Activated CD8-positive, alpha-beta T cell treated with anti-CD3 and anti-CD28 coated beads for 36 hours (primary cell): ENCODE measurements at regions of chr1 and their contacts with region 1.

Region 1: DNA sequence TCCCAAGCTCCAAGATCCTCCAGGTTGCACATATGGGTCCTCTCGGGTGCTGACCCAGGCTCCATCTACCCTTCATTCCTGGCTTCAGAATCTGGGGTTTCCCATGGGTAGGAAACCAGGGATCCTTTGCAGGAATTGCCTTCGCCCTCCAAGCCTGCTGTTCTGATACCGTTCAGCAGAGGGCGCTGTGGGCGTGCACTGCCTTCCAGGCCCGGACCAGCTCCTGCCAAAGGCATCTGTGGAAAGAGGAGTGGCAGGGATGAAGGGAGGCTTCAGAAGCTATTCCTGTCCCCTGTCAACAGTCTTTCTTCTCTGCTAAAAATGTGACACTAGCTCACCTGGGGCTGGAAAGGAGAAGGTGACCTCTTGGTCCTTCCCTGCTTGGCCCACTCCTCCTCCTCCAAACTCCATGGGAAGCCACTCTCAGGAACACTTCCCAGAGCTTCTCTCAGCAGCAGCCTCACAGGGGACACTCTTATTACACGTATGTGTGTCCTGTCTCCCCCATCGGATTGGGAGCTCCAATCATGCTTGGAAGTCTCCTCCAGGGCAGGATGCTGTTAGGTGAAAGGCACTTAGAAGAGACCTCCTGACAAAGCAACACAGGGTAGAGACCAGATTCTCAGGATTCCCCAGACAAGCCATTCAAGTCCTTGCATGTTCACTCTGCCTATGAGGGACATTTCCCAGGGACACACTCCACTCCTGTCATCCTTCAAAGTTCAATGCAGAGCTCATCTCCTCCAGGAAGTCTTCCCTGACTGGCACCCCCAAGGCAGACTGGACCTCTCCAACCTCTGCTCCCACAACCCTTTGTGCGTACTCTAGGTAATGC is 71.3 kb downstream of the VWA5B1 start:
- DNase-seq: peak; percentile 47
- ATAC-seq: no peak
- H3K4me3 Mint-ChIP-seq: no peak overlapping the region
- H3K27ac Mint-ChIP-seq: no peak overlapping the region
- H3K4me1 Mint-ChIP-seq: peaks cover 13% of the 10 kb centered on the region
- H3K27me3 Mint-ChIP-seq: peaks cover 65% of the 10 kb centered on the region
- CTCF ChIP-seq: peak; percentile 88

Region 2: DNA sequence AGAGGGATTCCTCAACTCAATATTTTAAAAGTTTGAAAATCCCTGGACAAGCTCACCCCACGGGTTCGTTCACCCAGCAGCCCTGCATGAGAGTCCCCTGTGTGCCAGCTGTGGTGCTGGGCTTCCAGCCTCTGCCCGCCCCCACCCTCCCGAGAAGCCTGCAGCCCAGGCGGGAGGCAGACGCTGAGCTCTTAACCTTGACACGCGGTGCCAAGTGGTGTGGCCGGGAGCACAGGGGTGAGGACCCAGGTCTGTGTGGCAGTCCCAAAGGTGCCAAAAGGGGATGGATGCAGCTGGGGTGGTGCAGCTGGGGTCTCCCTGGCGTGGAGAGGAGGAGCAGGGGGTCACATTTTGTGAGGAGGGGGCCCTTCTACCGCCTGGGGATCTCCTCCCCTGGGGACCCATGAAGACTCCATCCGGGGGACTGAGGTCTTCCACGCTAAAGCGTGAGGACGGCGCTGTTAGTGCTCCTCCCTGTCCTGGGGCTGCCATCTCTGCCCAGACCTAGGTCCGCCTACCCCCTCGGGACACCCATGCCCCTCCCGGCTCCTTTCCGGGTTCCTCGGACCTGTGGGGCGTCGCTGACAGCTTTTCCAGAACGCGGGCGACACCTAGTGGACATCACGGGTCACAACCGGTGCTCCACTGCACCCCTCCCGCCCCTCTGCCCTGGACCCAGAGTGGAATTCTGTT is 210.0 kb before region 1 on chr1:
- CTCF ChIA-PET with region 1: no interaction called
- POLR2A ChIA-PET with region 1: no interaction called
- intact Hi-C with region 1: no loop called
- DNase-seq: peak; percentile 81
- ATAC-seq: peak; percentile 98
- H3K4me3 Mint-ChIP-seq: peak overlapping the region; percentile 62
- H3K27ac Mint-ChIP-seq: no peak overlapping the region
- H3K4me1 Mint-ChIP-seq: peaks cover 10% of the 10 kb centered on the region
- H3K27me3 Mint-ChIP-seq: peaks cover 1% of the 10 kb centered on the region
- CTCF ChIP-seq: peak; percentile 97

Region 3: DNA sequence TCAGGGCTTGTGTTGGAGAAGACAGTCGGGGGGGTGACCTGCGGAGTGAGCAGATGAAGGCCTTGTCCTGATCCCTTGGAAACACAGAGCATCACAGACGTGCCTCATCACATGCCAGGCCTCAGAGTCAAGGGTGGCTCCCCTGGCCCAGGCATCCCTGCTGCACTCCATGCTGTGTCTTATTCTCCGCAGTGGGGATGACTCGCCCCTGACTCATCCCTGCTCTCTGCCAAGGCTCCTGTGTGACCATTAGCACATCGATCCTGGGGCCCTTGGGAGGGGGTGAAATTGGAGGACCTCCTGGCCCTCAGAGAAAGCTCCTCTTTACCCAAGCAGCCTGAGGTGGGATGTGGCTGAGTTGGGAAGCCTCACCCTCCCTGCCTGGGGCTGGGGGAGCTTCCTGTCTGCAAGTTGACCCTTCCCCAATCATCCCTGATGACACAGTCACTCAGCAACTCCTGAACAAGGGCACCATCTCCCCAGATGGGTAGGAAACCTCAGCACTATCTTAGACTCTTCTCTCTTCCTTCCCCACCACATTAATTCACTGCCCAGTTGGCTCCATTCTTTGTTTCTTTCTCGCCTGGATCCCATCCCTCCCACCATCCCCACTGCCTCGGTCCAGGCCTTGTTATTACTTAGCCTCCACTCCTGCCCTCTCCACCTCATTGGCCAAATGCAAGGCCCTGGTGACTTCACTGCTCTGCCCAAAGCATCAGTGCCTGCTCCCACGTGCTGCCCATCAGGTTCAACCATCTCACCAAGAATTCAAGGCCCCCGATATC is 49.4 kb after region 1 on chr1:
- CTCF ChIA-PET with region 1: no interaction called
- POLR2A ChIA-PET with region 1: no interaction called
- intact Hi-C with region 1: no loop called
- DNase-seq: peak; percentile 39
- ATAC-seq: no peak
- H3K4me3 Mint-ChIP-seq: no peak overlapping the region
- H3K27ac Mint-ChIP-seq: no peak overlapping the region
- H3K4me1 Mint-ChIP-seq: no peaks in the 10 kb centered on the region
- H3K27me3 Mint-ChIP-seq: peaks cover 8% of the 10 kb centered on the region
- CTCF ChIP-seq: no peak

Region 4: GRCh38 chr1:20430355-20431175 is 68.5 kb after region 1 on chr1:
- CTCF ChIA-PET with region 1: interaction called, 17 read pairs
- POLR2A ChIA-PET with region 1: interaction called, 3 read pairs
- intact Hi-C with region 1: no loop called
- DNase-seq: peak; percentile 60
- ATAC-seq: peak; percentile 47
- H3K4me3 Mint-ChIP-seq: no peak overlapping the region
- H3K27ac Mint-ChIP-seq: no peak overlapping the region
- H3K4me1 Mint-ChIP-seq: peaks cover 10% of the 10 kb centered on the region
- H3K27me3 Mint-ChIP-seq: peaks cover 40% of the 10 kb centered on the region
- CTCF ChIP-seq: peak; percentile 91